ENCODE measurements at regions of chr3 and their contacts with region 1.

Region 1: DNA sequence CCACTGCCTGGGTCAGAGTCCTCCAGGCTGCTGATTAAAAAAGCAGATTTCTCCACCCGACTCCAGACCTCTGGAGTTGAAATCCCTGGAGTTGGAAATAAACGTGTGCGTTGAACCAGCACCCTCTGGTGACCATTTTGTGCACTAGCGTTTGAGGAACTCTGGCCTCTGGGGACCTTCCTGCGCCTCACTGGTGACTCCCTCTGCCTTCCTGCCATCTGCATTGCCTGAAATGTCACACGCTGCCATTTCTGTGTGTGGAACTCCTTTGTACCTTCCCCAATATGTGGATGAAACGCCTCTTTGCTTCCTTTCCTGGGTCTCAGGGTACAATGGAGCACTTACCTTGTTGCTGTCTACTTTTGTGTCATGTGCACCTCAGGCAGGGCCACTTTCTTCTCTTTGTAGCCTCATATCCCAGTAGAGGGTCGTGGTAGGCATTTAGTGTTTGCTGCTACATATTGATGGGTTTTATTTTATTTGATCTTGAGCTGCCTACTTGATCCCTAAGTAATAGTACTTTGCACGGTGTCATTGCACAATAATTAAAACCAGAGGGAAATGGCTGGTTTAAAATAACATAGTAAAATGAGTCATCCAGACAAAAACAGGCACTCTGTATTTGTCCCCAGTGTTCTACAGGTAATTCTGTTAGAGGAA is 56.8 kb downstream of the GPR171 start:
- DNase-seq: peak; percentile 78
- H3K4me3 Mint-ChIP-seq: no peak overlapping the region
- H3K27ac Mint-ChIP-seq: no peak overlapping the region
- H3K4me1 Mint-ChIP-seq: no peaks in the 10 kb centered on the region
- H3K27me3 Mint-ChIP-seq: peaks cover 17% of the 10 kb centered on the region
- CTCF ChIP-seq: peak; percentile 96

Region 2: DNA sequence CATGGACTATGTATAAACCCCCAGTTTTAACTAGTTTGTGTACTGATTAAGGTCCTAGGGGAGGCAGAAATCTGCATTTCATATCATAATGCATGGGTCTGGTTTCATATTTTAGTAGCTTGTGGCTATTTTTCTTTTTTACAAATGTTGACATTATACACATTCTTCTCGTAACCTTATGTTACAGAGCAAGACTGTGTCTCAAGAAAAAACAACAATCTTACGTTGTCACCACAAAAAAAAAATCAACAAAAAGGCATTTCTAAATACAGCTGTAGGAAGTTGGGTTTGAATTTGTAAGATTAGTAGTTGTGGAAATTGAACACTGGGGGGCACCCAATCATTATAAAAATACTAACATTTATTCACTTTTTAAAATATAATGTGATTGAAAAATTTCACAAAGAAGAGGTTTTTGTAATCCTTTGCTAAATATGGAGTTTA is 617.8 kb before region 1 on chr3:
- CTCF ChIA-PET with region 1: no interaction called
- intact Hi-C with region 1: loop called (anchors 1 kb)
- DNase-seq: no peak
- H3K4me3 Mint-ChIP-seq: no peak overlapping the region
- H3K27ac Mint-ChIP-seq: no peak overlapping the region
- H3K4me1 Mint-ChIP-seq: no peaks in the 10 kb centered on the region
- H3K27me3 Mint-ChIP-seq: no peaks in the 10 kb centered on the region
- CTCF ChIP-seq: peak; percentile 39

Region 3: GRCh38 chr3:150787741-150788370 is 358.3 kb before region 1 on chr3:
- CTCF ChIA-PET with region 1: no interaction called
- intact Hi-C with region 1: loop called (anchors 2 kb)
- DNase-seq: peak; percentile 95
- H3K4me3 Mint-ChIP-seq: no peak overlapping the region
- H3K27ac Mint-ChIP-seq: no peak overlapping the region
- H3K4me1 Mint-ChIP-seq: no peaks in the 10 kb centered on the region
- H3K27me3 Mint-ChIP-seq: no peaks in the 10 kb centered on the region
- CTCF ChIP-seq: peak; percentile 98

Region 4: GRCh38 chr3:150925751-150926201 is 220.4 kb before region 1 on chr3:
- CTCF ChIA-PET with region 1: interaction called, 5 read pairs
- intact Hi-C with region 1: loop called (anchors 1 kb)
- DNase-seq: peak; percentile 87
- H3K4me3 Mint-ChIP-seq: no peak overlapping the region
- H3K27ac Mint-ChIP-seq: no peak overlapping the region
- H3K4me1 Mint-ChIP-seq: no peaks in the 10 kb centered on the region
- H3K27me3 Mint-ChIP-seq: peaks cover 63% of the 10 kb centered on the region
- CTCF ChIP-seq: peak; percentile 95

Region 5: DNA sequence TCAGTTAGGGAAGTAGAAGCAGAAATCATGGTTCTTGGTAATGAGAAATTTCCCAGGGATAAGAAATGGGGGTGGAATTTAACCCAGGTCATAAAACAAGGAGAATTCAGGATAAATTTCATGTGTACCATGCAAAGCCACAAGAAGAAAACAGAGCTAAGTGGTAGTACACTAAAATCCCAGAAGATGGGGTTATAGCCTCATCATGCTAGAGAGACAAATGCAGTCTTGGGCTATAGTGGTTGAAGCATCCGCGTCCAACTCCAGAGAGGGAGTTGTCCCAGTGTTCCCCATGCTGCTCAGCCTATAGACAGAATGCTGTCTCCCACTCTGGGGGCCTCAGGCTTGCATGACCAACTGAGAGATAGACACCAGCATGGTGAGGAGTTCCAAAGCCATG is 137.5 kb before region 1 on chr3:
- CTCF ChIA-PET with region 1: interaction called, 4 read pairs
- intact Hi-C with region 1: loop called (anchors 1 kb)
- DNase-seq: no peak
- H3K4me3 Mint-ChIP-seq: no peak overlapping the region
- H3K27ac Mint-ChIP-seq: no peak overlapping the region
- H3K4me1 Mint-ChIP-seq: peaks cover 2% of the 10 kb centered on the region
- H3K27me3 Mint-ChIP-seq: peaks cover 30% of the 10 kb centered on the region
- CTCF ChIP-seq: no peak

Region 6: GRCh38 chr3:151047636-151048035 is 98.6 kb before region 1 on chr3:
- CTCF ChIA-PET with region 1: no interaction called
- intact Hi-C with region 1: no loop called
- DNase-seq: no peak
- H3K4me3 Mint-ChIP-seq: no peak overlapping the region
- H3K27ac Mint-ChIP-seq: no peak overlapping the region
- H3K4me1 Mint-ChIP-seq: no peaks in the 10 kb centered on the region
- H3K27me3 Mint-ChIP-seq: peaks cover 1% of the 10 kb centered on the region
- CTCF ChIP-seq: no peak

Region 7: GRCh38 chr3:151067158-151067557 is 79.0 kb before region 1 on chr3:
- CTCF ChIA-PET with region 1: interaction called, 3 read pairs
- intact Hi-C with region 1: loop called (anchors 1 kb)
- DNase-seq: peak; percentile 39
- H3K4me3 Mint-ChIP-seq: no peak overlapping the region
- H3K27ac Mint-ChIP-seq: no peak overlapping the region
- H3K4me1 Mint-ChIP-seq: no peaks in the 10 kb centered on the region
- H3K27me3 Mint-ChIP-seq: no peaks in the 10 kb centered on the region
- CTCF ChIP-seq: peak; percentile 44

Region 8: DNA sequence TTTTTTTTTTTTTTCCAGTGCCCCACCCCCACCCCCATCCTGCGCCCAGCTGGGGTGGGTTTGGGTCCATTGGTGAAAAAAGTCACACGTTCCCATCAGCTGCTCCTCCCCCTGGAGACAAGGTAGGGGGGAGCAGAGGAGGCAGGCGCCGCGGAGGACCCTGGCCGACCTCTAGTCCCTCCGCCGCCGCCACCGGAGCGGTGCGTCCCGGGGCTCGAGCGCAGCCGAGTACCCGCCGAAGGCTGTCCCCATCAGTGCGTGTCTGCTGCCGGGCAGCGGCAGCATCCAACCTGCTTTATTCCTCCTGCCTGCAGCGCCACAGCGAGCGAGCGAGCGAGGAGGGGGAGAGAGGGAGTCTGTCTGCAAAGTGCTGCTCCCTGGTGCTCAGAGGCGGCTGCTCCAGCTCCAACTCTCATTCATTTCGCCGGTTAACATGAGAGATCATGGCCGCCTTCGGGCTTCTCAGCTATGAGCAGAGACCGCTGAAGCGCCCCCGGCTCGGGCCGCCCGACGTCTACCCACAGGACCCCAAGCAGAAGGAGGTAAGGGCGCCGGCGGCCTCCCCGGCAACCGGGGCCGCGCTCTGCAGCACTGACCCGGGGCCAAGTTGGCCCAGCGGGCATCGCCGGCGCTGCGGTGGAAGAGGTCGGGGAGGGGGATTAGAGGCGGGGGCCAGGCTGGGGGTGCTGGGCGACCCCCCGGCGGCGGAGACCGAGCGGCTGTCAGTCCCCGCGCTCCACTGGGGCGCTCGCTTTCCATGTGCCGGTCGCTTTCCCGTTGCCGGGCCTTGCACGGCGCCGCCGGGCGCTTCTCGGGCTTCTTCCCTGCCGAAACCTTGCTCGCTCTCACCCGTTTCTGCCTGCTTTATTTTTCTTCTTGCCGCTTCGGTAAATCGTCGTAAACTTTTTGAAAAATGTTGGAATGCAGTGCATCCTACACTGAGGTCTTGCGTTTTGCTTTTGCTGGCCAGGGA is 59.4 kb before region 1 on chr3:
- CTCF ChIA-PET with region 1: interaction called, 7 read pairs
- intact Hi-C with region 1: loop called (anchors 5 kb)
- DNase-seq: peak; percentile 82
- H3K4me3 Mint-ChIP-seq: peak overlapping the region; percentile 97
- H3K27ac Mint-ChIP-seq: peak overlapping the region; percentile 62
- H3K4me1 Mint-ChIP-seq: peaks cover 9% of the 10 kb centered on the region
- H3K27me3 Mint-ChIP-seq: peaks cover 37% of the 10 kb centered on the region
- CTCF ChIP-seq: peak; percentile 29

Region 9: DNA sequence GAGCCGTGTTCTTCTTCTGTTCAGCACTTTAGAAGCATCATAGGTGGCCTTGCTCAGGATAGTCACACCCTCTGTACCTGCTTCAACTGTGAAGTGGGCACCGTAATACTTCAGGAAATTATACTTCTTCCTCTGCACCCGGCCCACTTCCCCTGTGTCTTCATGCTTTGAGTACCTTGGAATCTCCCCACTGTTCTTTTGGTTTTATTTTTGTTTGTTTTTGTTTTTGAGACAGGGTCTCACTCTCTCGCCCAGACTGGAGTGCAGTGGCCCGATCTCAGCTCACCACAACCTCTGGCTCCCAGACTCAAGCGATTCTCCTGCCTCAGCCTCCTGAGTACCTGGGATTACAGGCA is 130.5 kb after region 1 on chr3:
- CTCF ChIA-PET with region 1: no interaction called
- intact Hi-C with region 1: no loop called
- DNase-seq: no peak
- H3K4me3 Mint-ChIP-seq: no peak overlapping the region
- H3K27ac Mint-ChIP-seq: no peak overlapping the region
- H3K4me1 Mint-ChIP-seq: no peaks in the 10 kb centered on the region
- H3K27me3 Mint-ChIP-seq: no peaks in the 10 kb centered on the region
- CTCF ChIP-seq: no peak